CD8-positive, alpha-beta T cell (primary cell): ENCODE measurements at regions of chr7 and their contacts with region 1.

Region 1: GRCh38 chr7:130741331-130741995 is 7.5 kb upstream of the KLF14 start:
- DNase-seq: no peak
- ATAC-seq: no peak
- H3K4me3 ChIP-seq: no peak overlapping the region
- H3K4me3 Mint-ChIP-seq: no peak overlapping the region
- H3K27ac ChIP-seq: no peak overlapping the region
- H3K27ac Mint-ChIP-seq: no peak overlapping the region
- H3K4me1 ChIP-seq: no peaks in the 10 kb centered on the region
- H3K4me1 Mint-ChIP-seq: no peaks in the 10 kb centered on the region
- H3K27me3 ChIP-seq: peaks cover 24% of the 10 kb centered on the region in 2 experiments
- H3K27me3 Mint-ChIP-seq: peaks cover 37% of the 10 kb centered on the region
- CTCF ChIP-seq: no peak

Region 2: DNA sequence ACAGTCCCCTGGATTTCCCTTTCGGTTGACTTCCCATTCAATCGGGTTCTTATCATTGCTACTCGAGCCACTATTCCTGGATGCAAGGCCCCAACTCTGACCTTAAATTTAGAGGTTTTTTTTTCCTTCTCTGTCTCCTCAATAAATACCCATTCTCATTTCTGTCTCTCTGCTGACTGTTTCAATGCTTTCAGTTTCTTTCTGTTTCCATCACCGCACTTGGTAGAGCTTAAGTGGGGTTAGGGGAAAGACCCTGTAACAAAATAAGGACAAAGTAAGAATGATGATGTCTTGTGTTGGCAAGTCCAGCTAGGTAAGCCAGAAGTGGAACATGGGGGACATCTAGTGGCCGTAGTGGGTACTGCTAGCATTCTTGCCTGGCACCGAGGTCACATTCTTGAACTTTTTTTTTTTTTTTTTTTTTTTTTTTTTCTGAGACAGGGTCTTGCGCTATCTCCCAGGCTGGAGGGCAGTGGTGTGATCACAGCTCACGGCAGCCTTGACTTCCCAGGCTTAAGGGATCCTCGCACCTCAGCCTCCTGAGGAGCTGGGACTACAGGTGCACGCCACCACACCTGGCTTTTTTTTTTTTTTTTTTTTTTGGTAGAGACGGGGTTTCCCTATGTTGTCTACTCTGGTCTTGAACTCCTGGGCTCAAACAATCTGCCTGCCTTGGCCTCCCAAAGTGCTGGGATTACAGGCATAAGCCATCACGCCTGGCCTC is 730.6 kb before region 1 on chr7:
- CTCF ChIA-PET with region 1: no interaction called
- POLR2A ChIA-PET with region 1: no interaction called
- intact Hi-C with region 1: no loop called
- DNase-seq: peak; percentile 78 to 92 (median 87)
- ATAC-seq: peak; percentile 96
- H3K4me3 ChIP-seq: no peak overlapping the region
- H3K4me3 Mint-ChIP-seq: no peak overlapping the region
- H3K27ac ChIP-seq: no peak overlapping the region
- H3K27ac Mint-ChIP-seq: no peak overlapping the region
- H3K4me1 ChIP-seq: no peaks in the 10 kb centered on the region
- H3K4me1 Mint-ChIP-seq: peaks cover 2% of the 10 kb centered on the region
- H3K27me3 ChIP-seq: no peaks in the 10 kb centered on the region
- H3K27me3 Mint-ChIP-seq: no peaks in the 10 kb centered on the region
- CTCF ChIP-seq: peak; percentile 79

Region 3: DNA sequence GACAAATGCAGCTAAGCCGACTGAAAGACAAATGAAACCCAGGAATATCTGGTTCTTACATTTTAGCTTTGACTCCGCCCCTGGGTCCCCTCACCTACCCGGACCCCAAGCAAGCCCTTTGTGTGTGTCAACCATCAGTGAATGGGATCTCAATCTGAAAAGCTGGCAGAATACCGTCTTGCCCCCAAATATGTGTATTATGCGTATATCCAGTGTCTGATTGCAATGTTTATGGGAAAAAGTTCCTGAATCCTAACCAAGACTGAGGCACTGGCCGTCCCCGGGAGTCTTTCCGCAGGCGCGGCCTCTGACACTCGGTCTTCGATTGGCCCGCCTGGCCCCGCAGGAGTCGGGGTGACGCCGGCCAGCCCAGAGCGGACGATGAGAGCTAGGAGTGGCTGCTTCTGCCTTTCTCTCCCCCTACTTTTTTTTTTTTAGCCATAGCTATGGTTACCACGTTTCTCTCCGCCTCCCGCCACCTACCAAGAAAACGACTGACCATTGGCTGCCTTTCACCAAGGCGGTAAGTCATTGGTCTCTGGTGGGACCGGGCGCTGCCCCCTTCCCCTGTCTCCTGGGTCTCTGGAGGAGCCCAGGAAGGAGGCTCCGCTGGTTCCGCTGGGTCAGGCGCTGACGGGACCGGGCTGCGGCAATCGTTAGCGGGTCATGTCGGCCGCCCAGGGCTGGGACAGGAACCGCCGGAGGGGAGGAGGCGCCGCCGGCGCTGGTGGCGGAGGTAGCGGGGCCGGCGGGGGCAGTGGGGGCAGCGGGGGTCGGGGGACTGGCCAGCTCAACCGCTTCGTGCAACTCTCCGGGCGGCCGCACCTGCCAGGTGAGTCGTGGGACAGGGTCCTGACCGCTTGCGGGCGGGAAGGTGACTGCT is 671.2 kb before region 1 on chr7 and contains the start of gene KLHDC10:
- CTCF ChIA-PET with region 1: no interaction called
- POLR2A ChIA-PET with region 1: no interaction called
- intact Hi-C with region 1: no loop called
- DNase-seq: peak; percentile 89 to 99 (median 96)
- ATAC-seq: peak; percentile 93
- H3K4me3 ChIP-seq: peak within 1 kb of the TSS; percentile 67 to 72
- H3K4me3 Mint-ChIP-seq: peak within 1 kb of the TSS; percentile 87
- H3K27ac ChIP-seq: peak within 1 kb of the TSS; percentile 76 to 85
- H3K27ac Mint-ChIP-seq: peak within 1 kb of the TSS; percentile 92
- H3K4me1 ChIP-seq: peaks cover 22% of the 10 kb centered on the region
- H3K4me1 Mint-ChIP-seq: peaks cover 45% of the 10 kb centered on the region
- H3K27me3 ChIP-seq: peaks cover 0 to 2% of the 10 kb centered on the region in 2 experiments
- H3K27me3 Mint-ChIP-seq: no peaks in the 10 kb centered on the region
- CTCF ChIP-seq: no peak
- total RNA-seq, gene KLHDC10: 9.6 to 9.9 TPM

Region 4: DNA sequence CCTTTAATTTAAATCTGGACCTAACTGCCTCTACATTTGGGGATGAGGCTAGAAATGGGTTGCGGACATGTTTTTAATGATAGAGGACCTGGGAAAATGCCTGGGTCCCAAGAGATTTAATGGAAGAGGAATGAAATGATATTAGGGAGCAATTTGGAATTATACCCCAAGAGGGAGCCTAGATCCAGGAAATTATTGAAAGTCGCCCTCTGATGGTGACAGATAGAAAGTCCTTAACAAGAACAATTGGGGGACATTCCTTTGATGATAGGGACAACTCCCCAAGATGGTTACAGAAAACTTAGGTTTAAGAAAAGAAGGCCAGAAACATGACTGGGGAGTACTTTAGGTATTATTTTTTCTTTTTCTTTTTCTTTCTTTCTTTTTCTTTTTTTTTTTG is 45.6 kb before region 1 on chr7:
- CTCF ChIA-PET with region 1: no interaction called
- POLR2A ChIA-PET with region 1: no interaction called
- intact Hi-C with region 1: no loop called
- DNase-seq: peak in 2 of 9 experiments; percentile 7 to 33
- ATAC-seq: no peak
- H3K4me3 ChIP-seq: no peak overlapping the region
- H3K4me3 Mint-ChIP-seq: no peak overlapping the region
- H3K27ac ChIP-seq: no peak overlapping the region
- H3K27ac Mint-ChIP-seq: no peak overlapping the region
- H3K4me1 ChIP-seq: no peaks in the 10 kb centered on the region
- H3K4me1 Mint-ChIP-seq: no peaks in the 10 kb centered on the region
- H3K27me3 ChIP-seq: no peaks in the 10 kb centered on the region
- H3K27me3 Mint-ChIP-seq: no peaks in the 10 kb centered on the region
- CTCF ChIP-seq: no peak

Region 5: GRCh38 chr7:130758429-130759056 is 17.1 kb after region 1 on chr7:
- CTCF ChIA-PET with region 1: interaction called, 10 read pairs
- POLR2A ChIA-PET with region 1: no interaction called
- intact Hi-C with region 1: no loop called
- DNase-seq: peak in 2 of 9 experiments; percentile 57 to 71
- ATAC-seq: peak; percentile 56
- H3K4me3 ChIP-seq: no peak overlapping the region
- H3K4me3 Mint-ChIP-seq: no peak overlapping the region
- H3K27ac ChIP-seq: no peak overlapping the region
- H3K27ac Mint-ChIP-seq: no peak overlapping the region
- H3K4me1 ChIP-seq: no peaks in the 10 kb centered on the region
- H3K4me1 Mint-ChIP-seq: no peaks in the 10 kb centered on the region
- H3K27me3 ChIP-seq: no peaks in the 10 kb centered on the region
- H3K27me3 Mint-ChIP-seq: peaks cover 6% of the 10 kb centered on the region
- CTCF ChIP-seq: peak; percentile 84